ENCODE measurements at regions of chr22 and their contacts with region 1.

Region 1: GRCh38 chr22:35430897-35431322 is 31.0 kb downstream of the MCM5 start:
- DNase-seq: peak; percentile 87
- H3K4me3 ChIP-seq: no peak overlapping the region
- H3K27ac ChIP-seq: peak overlapping the region; percentile 44
- H3K4me1 ChIP-seq: peaks cover 16% of the 10 kb centered on the region
- H3K27me3 ChIP-seq: no peaks in the 10 kb centered on the region
- CTCF ChIP-seq: peak; percentile 82 to 98

Region 2: GRCh38 chr22:35357883-35358621 is 72.9 kb before region 1 on chr22:
- CTCF ChIA-PET with region 1: no interaction called
- dilution Hi-C with region 1: loop called (anchors 5 kb)
- in situ Hi-C with region 1: no loop called
- intact Hi-C with region 1: no loop called
- DNase-seq: peak; percentile 96
- H3K4me3 ChIP-seq: no peak overlapping the region
- H3K27ac ChIP-seq: peak overlapping the region; percentile 51
- H3K4me1 ChIP-seq: peaks cover 6% of the 10 kb centered on the region
- H3K27me3 ChIP-seq: no peaks in the 10 kb centered on the region
- CTCF ChIP-seq: no peak

Region 3: GRCh38 chr22:35479985-35480550 is 49.2 kb after region 1 on chr22:
- CTCF ChIA-PET with region 1: no interaction called
- dilution Hi-C with region 1: loop called (anchors 10 kb)
- in situ Hi-C with region 1: no loop called
- intact Hi-C with region 1: no loop called
- DNase-seq: no peak
- H3K4me3 ChIP-seq: no peak overlapping the region
- H3K27ac ChIP-seq: no peak overlapping the region
- H3K4me1 ChIP-seq: no peaks in the 10 kb centered on the region
- H3K27me3 ChIP-seq: peaks cover 2% of the 10 kb centered on the region
- CTCF ChIP-seq: no peak

Region 4: GRCh38 chr22:35749808-35750207 is 318.9 kb after region 1 on chr22:
- CTCF ChIA-PET with region 1: no interaction called
- dilution Hi-C with region 1: no loop called
- in situ Hi-C with region 1: loop called in 1 of 2 experiments (anchors 25 kb)
- intact Hi-C with region 1: no loop called
- DNase-seq: no peak
- H3K4me3 ChIP-seq: no peak overlapping the region
- H3K27ac ChIP-seq: no peak overlapping the region
- H3K4me1 ChIP-seq: no peaks in the 10 kb centered on the region
- H3K27me3 ChIP-seq: no peaks in the 10 kb centered on the region
- CTCF ChIP-seq: no peak

Region 5: DNA sequence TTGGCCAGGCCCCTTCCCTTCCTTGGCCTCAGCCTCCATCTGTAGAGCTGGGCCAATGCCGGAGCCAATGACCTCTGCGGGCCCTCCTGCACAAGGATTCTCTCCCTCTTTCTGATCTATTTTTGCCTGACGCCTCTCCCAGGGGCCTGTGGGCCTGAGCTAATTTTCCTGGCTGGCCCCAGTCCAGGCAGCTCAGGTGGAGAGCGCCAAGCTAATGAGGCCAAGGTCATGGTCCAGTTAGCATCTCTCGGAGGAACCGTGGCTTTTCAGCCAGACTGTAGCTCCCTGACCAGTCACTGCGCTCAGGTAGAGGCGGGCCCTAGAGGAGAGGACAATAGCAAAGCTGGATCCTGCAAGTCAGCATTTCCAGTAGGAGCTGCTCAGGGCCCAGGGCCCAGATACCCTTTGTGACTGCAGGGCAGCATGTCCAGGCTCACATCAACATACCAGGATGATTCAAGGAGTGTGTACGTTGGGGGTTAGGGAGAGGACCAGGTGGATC is 686.2 kb after region 1 on chr22:
- CTCF ChIA-PET with region 1: no interaction called
- dilution Hi-C with region 1: loop called (anchors 5 kb)
- in situ Hi-C with region 1: loop called in 1 of 2 experiments (anchors 10 kb)
- intact Hi-C with region 1: no loop called
- DNase-seq: no peak
- H3K4me3 ChIP-seq: no peak overlapping the region
- H3K27ac ChIP-seq: no peak overlapping the region
- H3K4me1 ChIP-seq: no peaks in the 10 kb centered on the region
- H3K27me3 ChIP-seq: no peaks in the 10 kb centered on the region
- CTCF ChIP-seq: no peak

Measured in mammary epithelial cell (primary cell).